Naive thymus-derived CD4-positive, alpha-beta T cell (primary cell): ENCODE measurements at regions of chr4 and their contacts with region 1.

Region 1: GRCh38 chr4:108018040-108018883 is 28.6 kb downstream of the HADH start:
- DNase-seq: peak; percentile 63 to 86 (median 76)
- ATAC-seq: peak; percentile 84
- H3K4me3 ChIP-seq: no peak overlapping the region
- H3K4me3 Mint-ChIP-seq: no peak overlapping the region
- H3K27ac ChIP-seq: no peak overlapping the region
- H3K27ac Mint-ChIP-seq: peak overlapping the region in 6 of 9 donors; percentile 5 to 86 (median 52)
- H3K4me1 ChIP-seq: no peaks in the 10 kb centered on the region
- H3K4me1 Mint-ChIP-seq: peaks cover 0 to 27% (median 14%) of the 10 kb centered on the region in 7 donors
- H3K27me3 ChIP-seq: no peaks in the 10 kb centered on the region
- H3K27me3 Mint-ChIP-seq: no peaks in the 10 kb centered on the region

Region 2: DNA sequence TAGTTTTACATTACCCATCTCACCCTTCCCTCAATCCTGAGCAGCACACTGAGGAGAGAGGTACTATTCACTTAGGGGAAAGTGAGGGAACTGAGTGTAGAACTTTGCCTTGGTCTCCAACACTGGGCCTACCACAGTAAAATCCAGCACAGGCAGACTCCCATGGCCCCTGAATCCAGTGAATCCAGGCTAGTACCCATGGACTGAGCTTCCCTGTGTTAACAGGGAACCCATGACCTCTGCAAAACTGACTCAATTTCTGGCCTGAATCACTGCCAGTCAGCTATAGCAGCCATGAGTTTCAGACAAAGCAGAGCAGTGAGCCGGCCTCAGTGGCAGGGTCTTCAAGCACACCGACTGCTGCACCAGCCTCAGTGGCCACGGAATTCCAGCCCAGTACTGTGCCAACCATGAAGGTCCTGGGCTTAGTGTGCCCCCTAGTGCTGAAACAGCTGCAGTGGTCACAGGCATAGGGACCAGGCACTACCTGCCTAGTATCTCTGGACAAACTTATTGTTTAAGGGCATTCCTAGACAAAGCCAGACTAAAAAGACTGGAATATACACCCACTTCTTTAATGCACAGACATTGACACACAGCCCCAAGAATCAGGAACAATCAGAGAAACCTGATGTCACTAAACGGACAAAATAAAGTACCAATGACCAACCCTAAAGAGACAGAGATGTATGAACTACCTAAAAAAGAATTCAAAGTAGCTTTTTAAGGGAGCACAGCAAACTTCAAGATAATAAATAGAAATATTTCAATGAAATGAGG is 474.7 kb after region 1 on chr4:
- CTCF ChIA-PET with region 1: interaction called, 6 read pairs
- POLR2A ChIA-PET with region 1: no interaction called
- intact Hi-C with region 1: loop called (anchors 1 to 5 kb)
- DNase-seq: no peak
- ATAC-seq: peak; percentile 27
- H3K4me3 ChIP-seq: no peak overlapping the region
- H3K4me3 Mint-ChIP-seq: no peak overlapping the region
- H3K27ac ChIP-seq: no peak overlapping the region
- H3K27ac Mint-ChIP-seq: no peak overlapping the region
- H3K4me1 ChIP-seq: no peaks in the 10 kb centered on the region
- H3K4me1 Mint-ChIP-seq: peaks cover 0 to 13% (median 3%) of the 10 kb centered on the region in 7 donors
- H3K27me3 ChIP-seq: no peaks in the 10 kb centered on the region
- H3K27me3 Mint-ChIP-seq: peaks cover 0 to 3% (median 0%) of the 10 kb centered on the region in 5 donors

Region 3: DNA sequence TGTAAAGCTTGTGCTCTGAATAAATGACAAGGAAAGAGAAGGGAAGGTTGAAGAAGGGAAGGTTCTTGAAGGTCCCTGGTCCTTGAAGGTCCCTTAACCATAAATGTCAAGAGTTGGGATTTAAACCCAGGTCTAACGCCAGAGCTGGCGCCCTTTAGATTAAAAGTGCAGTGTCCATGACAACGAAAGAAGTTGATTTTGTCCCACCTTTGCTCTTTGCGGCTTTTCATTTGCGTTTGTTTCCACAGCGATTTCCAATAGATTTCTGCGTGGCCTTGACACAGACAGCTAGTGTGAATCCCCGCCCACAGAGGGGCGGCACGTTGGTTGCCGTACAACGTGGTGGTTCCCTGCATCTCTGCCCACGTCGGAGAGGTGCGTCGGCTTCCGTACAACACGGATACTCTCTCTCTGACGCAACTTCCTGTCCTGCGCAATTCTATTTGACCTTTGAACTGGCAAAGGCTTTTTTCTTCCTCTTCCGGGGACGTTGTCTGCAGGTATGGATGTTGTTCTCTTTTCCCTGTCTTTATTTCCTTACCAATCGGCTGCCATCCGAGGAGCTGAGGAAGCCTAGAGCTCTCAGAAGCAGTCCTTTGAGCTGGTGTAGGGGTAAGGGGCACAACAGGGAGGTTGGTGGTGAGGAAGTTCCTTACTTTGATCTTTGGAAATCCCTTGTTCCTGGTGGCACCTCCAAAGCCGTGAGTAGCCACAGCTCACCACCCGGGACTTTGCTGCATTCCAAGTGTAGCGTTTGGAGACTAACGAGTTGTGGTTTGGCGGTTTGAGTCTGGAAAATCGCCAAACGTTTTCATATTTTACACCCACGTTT is 602.1 kb after region 1 on chr4 and contains the start of gene RPL34:
- CTCF ChIA-PET with region 1: interaction called, 3 read pairs
- POLR2A ChIA-PET with region 1: interaction called, 3 read pairs
- intact Hi-C with region 1: loop called (anchors 2 kb)
- DNase-seq: peak; percentile 85 to 99 (median 96)
- ATAC-seq: peak; percentile 100
- H3K4me3 ChIP-seq: peak within 1 kb of the TSS; percentile 98
- H3K4me3 Mint-ChIP-seq: peak within 1 kb of the TSS; percentile 87 to 99 (median 96)
- H3K27ac ChIP-seq: peak within 1 kb of the TSS; percentile 90
- H3K27ac Mint-ChIP-seq: peak within 1 kb of the TSS; percentile 95 to 99 (median 97)
- H3K4me1 ChIP-seq: peaks cover 29 to 30% of the 10 kb centered on the region in 2 donors
- H3K4me1 Mint-ChIP-seq: peaks cover 33 to 81% (median 66%) of the 10 kb centered on the region in 7 donors
- H3K27me3 ChIP-seq: no peaks in the 10 kb centered on the region
- H3K27me3 Mint-ChIP-seq: peaks cover 0 to 3% (median 0%) of the 10 kb centered on the region in 5 donors
- total RNA-seq, gene RPL34: 1,411 to 3,442 (median 3,215) TPM

Region 4: DNA sequence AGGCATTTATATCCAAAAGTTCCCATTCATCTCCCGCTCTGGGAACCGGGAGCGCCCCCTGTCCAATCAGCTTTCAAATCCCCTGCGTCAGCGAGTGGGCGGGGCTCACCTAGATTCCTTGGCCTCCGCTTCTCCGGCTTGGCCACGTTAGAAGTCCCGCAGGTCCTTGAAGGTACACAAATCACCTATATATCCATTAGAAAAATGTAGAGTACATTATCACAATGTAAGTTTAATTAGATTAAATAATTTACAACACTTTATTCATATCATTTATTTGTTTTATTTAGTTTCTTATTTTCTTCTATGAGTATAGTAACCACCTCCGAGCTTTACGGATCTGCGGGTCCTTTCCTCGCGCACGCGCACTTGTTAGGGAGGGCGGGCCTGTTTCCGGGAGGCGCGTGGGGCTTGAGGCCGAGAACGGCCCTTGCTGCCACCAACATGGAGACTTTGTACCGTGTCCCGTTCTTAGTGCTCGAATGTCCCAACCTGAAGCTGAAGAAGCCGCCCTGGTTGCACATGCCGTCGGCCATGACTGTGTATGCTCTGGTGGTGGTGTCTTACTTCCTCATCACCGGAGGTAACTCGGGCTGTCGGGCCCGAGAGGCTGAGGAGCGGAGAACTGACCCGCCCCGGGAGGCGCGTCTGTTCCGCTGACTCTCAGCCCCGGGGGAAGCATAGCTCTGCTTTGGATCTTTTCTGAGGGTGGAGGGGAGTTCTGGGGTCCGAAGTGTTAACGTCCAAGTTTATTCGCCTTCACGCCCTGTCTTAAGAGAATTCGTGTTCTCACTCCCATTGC is 632.2 kb after region 1 on chr4 and contains the start of gene OSTC:
- CTCF ChIA-PET with region 1: no interaction called
- POLR2A ChIA-PET with region 1: no interaction called
- intact Hi-C with region 1: loop called (anchors 1 to 2 kb)
- DNase-seq: peak; percentile 88 to 95 (median 91)
- ATAC-seq: peak; percentile 94
- H3K4me3 ChIP-seq: peak within 1 kb of the TSS; percentile 98
- H3K4me3 Mint-ChIP-seq: peak within 1 kb of the TSS; percentile 90 to 99 (median 94)
- H3K27ac ChIP-seq: peak within 1 kb of the TSS; percentile 96
- H3K27ac Mint-ChIP-seq: peak within 1 kb of the TSS; percentile 89 to 99 (median 98)
- H3K4me1 ChIP-seq: peaks cover 8 to 13% of the 10 kb centered on the region in 2 donors
- H3K4me1 Mint-ChIP-seq: peaks cover 22 to 49% (median 41%) of the 10 kb centered on the region in 7 donors
- H3K27me3 ChIP-seq: no peaks in the 10 kb centered on the region
- H3K27me3 Mint-ChIP-seq: no peaks in the 10 kb centered on the region
- total RNA-seq, gene OSTC: 31.8 to 98.2 (median 55.6) TPM

Region 5: DNA sequence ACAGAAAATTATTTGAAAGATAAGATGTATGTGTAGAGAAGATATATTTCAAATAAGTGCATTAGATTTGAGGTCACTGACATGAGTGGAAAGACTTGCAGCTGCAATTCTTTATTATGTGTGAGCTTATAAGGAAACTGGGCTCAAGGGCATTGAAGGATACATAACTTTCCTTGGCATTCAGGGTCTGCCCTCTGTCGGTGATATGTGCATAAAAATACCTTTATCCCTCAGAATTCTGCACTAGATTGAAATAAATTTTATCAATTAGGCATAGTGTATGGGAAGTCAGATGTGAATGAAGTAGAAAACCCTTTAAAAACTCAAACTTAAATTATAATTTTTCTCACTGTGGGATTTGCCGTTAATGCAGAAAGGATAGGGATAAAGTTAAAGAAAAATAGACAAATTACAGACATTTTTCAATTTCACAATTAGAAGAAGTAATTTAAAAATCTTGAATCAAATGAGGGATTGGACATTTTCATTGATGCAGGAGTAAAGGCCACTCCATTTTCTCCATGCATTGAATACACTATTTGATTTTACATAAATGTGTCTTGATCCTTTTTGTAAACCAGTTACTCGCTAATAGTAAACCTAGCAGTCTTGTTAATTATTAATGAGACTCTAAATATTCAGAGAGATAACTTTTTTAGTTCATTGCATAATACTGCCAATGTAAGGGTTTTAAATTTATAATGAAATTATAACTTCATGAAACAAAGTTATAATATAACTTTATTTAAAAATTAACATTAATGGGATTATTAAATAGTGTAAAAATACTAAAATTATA is 765.6 kb after region 1 on chr4:
- CTCF ChIA-PET with region 1: interaction called, 3 read pairs
- POLR2A ChIA-PET with region 1: no interaction called
- intact Hi-C with region 1: loop called in 1 of 2 experiments (anchors 1 kb)
- DNase-seq: peak in 1 of 9 donors; percentile 22
- ATAC-seq: no peak
- H3K4me3 ChIP-seq: no peak overlapping the region
- H3K4me3 Mint-ChIP-seq: no peak overlapping the region
- H3K27ac ChIP-seq: no peak overlapping the region
- H3K27ac Mint-ChIP-seq: no peak overlapping the region
- H3K4me1 ChIP-seq: no peaks in the 10 kb centered on the region
- H3K4me1 Mint-ChIP-seq: no peaks in the 10 kb centered on the region
- H3K27me3 ChIP-seq: no peaks in the 10 kb centered on the region
- H3K27me3 Mint-ChIP-seq: peaks cover 0 to 16% (median 8%) of the 10 kb centered on the region in 5 donors